ENCODE measurements at regions of chr2 and their contacts with region 1.

Region 1: GRCh38 chr2:23636426-23636825 is 251.4 kb downstream of the KLHL29 start:
- DNase-seq: peak in 1 of 2 donors; percentile 40
- ATAC-seq: peak in 7 of 8 donors; percentile 54 to 80 (median 64)
- H3K4me3 ChIP-seq: no peak overlapping the region
- H3K27ac ChIP-seq: peak overlapping the region in 8 of 10 donors; percentile 1 to 67 (median 63)
- H3K4me1 ChIP-seq: peaks cover 5 to 19% (median 14%) of the 10 kb centered on the region in 9 donors
- H3K27me3 ChIP-seq: no peaks in the 10 kb centered on the region
- CTCF ChIP-seq: peak in 8 of 9 donors; percentile 10 to 58 (median 42)

Region 2: GRCh38 chr2:23566236-23567142 is 69.9 kb before region 1 on chr2:
- intact Hi-C with region 1: no loop called
- DNase-seq: no peak
- ATAC-seq: no peak
- H3K4me3 ChIP-seq: no peak overlapping the region
- H3K27ac ChIP-seq: peak overlapping the region in 4 of 10 donors; percentile 28 to 67 (median 52)
- H3K4me1 ChIP-seq: peaks cover 5 to 35% (median 19%) of the 10 kb centered on the region in 9 donors
- H3K27me3 ChIP-seq: no peaks in the 10 kb centered on the region
- CTCF ChIP-seq: peak in 7 of 9 donors; percentile 20 to 44 (median 30)

Region 3: GRCh38 chr2:23745726-23746105 is 109.3 kb after region 1 on chr2:
- intact Hi-C with region 1: loop called in 1 of 10 experiments (anchors 5 kb)
- DNase-seq: peak in 1 of 2 donors; percentile 40
- ATAC-seq: peak; percentile 75 to 99 (median 93)
- H3K4me3 ChIP-seq: no peak overlapping the region
- H3K27ac ChIP-seq: no peak overlapping the region
- H3K4me1 ChIP-seq: peaks cover 0 to 15% (median 9%) of the 10 kb centered on the region in 9 donors
- H3K27me3 ChIP-seq: no peaks in the 10 kb centered on the region
- CTCF ChIP-seq: no peak

Region 4: GRCh38 chr2:23803965-23804542 is 167.6 kb after region 1 on chr2:
- intact Hi-C with region 1: no loop called
- DNase-seq: peak; percentile 17 to 25
- ATAC-seq: peak in 3 of 8 donors; percentile 44 to 62 (median 45)
- H3K4me3 ChIP-seq: no peak overlapping the region
- H3K27ac ChIP-seq: no peak overlapping the region
- H3K4me1 ChIP-seq: peaks cover 0 to 22% (median 4%) of the 10 kb centered on the region in 9 donors
- H3K27me3 ChIP-seq: no peaks in the 10 kb centered on the region
- CTCF ChIP-seq: peak in 5 of 9 donors; percentile 19 to 34 (median 24)

Measured in heart right ventricle (tissue), 16 donors.